Transverse colon (tissue), 4 donors: ENCODE measurements at regions of chr5 and their contacts with region 1.

Region 1: GRCh38 chr5:162189719-162190118 is 122.1 kb downstream of the GABRG2 start:
- DNase-seq: no peak
- H3K4me3 ChIP-seq: no peak overlapping the region
- H3K27ac ChIP-seq: no peak overlapping the region
- H3K4me1 ChIP-seq: no peaks in the 10 kb centered on the region
- H3K27me3 ChIP-seq: no peaks in the 10 kb centered on the region
- CTCF ChIP-seq: no peak
- EP300 ChIP-seq: no peak
- POLR2A ChIP-seq: no peak

Region 2: DNA sequence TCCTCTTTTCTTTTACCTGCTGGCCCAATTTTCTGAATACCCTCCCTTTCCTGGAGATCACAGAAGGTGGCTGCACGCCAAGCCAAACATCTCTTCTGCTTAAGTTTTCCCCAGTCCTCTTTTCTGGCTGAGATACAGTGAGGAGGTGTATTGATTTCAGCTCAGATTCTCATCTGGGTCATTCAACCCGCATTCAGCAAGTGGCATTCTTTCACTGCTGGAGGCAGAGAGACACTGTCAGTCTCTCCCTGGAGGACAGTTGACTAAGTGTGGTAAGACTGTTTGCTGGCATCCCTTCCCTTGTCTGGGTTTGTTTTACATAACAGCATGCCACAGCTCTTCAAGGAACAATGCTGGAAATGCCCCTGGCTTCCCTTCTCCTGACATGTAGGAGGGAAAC is 61.6 kb before region 1 on chr5:
- in situ Hi-C with region 1: no loop called
- intact Hi-C with region 1: loop called (anchors 2 kb)
- DNase-seq: no peak
- H3K4me3 ChIP-seq: no peak overlapping the region
- H3K27ac ChIP-seq: no peak overlapping the region
- H3K4me1 ChIP-seq: no peaks in the 10 kb centered on the region
- H3K27me3 ChIP-seq: no peaks in the 10 kb centered on the region
- CTCF ChIP-seq: no peak
- EP300 ChIP-seq: no peak
- POLR2A ChIP-seq: no peak